ENCODE measurements at regions of chr12 and their contacts with region 1.

Region 1: DNA sequence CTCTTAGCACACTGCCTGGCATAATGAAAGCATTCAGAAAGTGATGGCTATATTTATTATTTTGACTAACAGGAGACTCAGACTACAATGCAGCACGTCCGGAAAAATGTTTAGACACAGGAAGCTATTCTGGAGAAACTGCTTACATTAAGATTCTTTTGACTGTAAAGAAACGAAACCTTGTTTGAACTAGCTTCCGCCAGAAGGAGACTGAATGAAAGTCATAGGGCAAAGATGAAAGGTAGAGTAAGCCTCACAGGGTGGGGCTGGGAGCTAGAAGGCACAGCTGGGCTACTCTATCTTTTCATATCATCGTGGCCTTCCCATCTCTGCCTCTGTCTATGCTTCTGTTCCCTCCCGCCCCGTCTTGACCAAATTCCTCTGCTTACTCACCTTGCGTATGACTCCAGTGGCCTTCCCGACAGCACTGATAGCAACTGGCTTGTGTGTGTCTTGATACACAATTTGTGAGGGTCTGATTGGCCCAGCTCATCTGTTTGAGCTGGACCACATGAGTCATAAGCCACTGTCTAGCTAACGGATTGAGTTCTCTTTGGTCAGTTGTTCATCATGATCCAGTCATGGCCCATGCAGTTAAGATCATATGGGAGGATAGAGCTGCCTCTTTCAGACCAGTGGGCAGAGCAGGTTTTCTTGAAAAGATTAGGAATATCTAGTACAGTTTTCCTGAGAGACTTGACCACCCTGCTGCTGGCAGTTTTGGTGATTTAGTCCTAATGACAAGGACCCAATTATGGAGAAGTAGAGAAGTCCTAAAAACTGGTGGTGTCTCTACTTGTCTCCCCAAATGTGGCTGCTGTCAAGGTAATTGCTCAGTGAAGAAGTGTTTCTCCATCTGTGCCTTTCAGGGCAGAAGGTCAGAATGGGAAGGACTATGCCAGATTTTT is 151.5 kb upstream of the SLC38A2 start:
- DNase-seq: peak; percentile 76
- H3K4me3 Mint-ChIP-seq: peak overlapping the region; percentile 61
- H3K27ac Mint-ChIP-seq: peak overlapping the region; percentile 81
- H3K4me1 Mint-ChIP-seq: peaks cover 38% of the 10 kb centered on the region
- H3K27me3 Mint-ChIP-seq: no peaks in the 10 kb centered on the region

Region 2: GRCh38 chr12:45509187-45509586 is 1014.9 kb before region 1 on chr12:
- CTCF ChIA-PET with region 1: no interaction called
- intact Hi-C with region 1: no loop called
- DNase-seq: peak; percentile 18
- H3K4me3 Mint-ChIP-seq: no peak overlapping the region
- H3K27ac Mint-ChIP-seq: no peak overlapping the region
- H3K4me1 Mint-ChIP-seq: peaks cover 3% of the 10 kb centered on the region
- H3K27me3 Mint-ChIP-seq: no peaks in the 10 kb centered on the region

Region 3: GRCh38 chr12:46608431-46609272 is 84.5 kb after region 1 on chr12:
- CTCF ChIA-PET with region 1: no interaction called
- intact Hi-C with region 1: loop called (anchors 5 kb)
- DNase-seq: no peak
- H3K4me3 Mint-ChIP-seq: no peak overlapping the region
- H3K27ac Mint-ChIP-seq: no peak overlapping the region
- H3K4me1 Mint-ChIP-seq: peaks cover 29% of the 10 kb centered on the region
- H3K27me3 Mint-ChIP-seq: no peaks in the 10 kb centered on the region

Region 4: DNA sequence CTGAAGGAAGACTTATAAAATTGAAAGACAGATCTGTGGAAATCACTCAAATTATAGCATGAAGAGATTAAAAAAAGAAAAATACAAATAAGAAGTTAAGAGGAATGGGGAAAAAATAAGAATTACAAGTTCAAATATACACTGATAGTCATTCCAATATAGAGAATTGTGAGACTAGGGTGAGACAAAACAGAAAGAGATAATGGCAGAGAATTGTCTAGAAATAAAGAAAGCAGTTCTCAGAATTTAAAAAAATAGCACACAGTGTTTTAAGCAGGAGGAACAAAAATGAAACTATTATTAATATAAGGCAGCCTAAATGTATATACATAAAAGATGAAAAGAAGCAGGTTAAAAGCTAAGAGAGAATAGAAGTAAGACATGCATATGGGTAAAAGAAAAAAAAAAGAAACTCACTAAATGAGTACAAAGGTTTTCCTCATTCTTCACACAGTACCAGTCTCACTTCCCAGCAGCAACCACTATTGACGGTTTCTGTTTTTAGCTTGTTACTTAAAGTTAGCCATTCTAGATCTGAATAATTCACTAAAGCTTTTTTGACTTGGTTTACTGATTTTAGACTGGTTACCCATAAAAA is 270.6 kb after region 1 on chr12:
- CTCF ChIA-PET with region 1: no interaction called
- intact Hi-C with region 1: loop called (anchors 1 kb)
- DNase-seq: peak; percentile 46
- H3K4me3 Mint-ChIP-seq: no peak overlapping the region
- H3K27ac Mint-ChIP-seq: peak overlapping the region; percentile 80
- H3K4me1 Mint-ChIP-seq: peaks cover 27% of the 10 kb centered on the region
- H3K27me3 Mint-ChIP-seq: no peaks in the 10 kb centered on the region